Common myeloid progenitor, CD34-positive (primary cell): ENCODE measurements at regions of chr16 and their contacts with region 1.

Region 1: GRCh38 chr16:28317040-28317880 is 24.9 kb downstream of the SBK1 start:
- DNase-seq: peak; percentile 64 to 76 (median 75)
- H3K4me3 ChIP-seq: no peak overlapping the region
- H3K27ac ChIP-seq: no peak overlapping the region
- H3K4me1 ChIP-seq: peaks cover 0 to 2% (median 0%) of the 10 kb centered on the region in 4 experiments
- H3K27me3 ChIP-seq: no peaks in the 10 kb centered on the region

Region 2: GRCh38 chr16:28082624-28083023 is 234.6 kb before region 1 on chr16:
- CTCF ChIA-PET with region 1: no interaction called
- POLR2A ChIA-PET with region 1: no interaction called
- DNase-seq: no peak
- H3K4me3 ChIP-seq: no peak overlapping the region
- H3K27ac ChIP-seq: no peak overlapping the region
- H3K4me1 ChIP-seq: no peaks in the 10 kb centered on the region
- H3K27me3 ChIP-seq: no peaks in the 10 kb centered on the region

Region 3: GRCh38 chr16:28112883-28113282 is 204.4 kb before region 1 on chr16:
- CTCF ChIA-PET with region 1: no interaction called
- POLR2A ChIA-PET with region 1: no interaction called
- DNase-seq: no peak
- H3K4me3 ChIP-seq: no peak overlapping the region
- H3K27ac ChIP-seq: no peak overlapping the region
- H3K4me1 ChIP-seq: peaks cover 17 to 41% (median 34%) of the 10 kb centered on the region in 4 experiments
- H3K27me3 ChIP-seq: no peaks in the 10 kb centered on the region

Region 4: DNA sequence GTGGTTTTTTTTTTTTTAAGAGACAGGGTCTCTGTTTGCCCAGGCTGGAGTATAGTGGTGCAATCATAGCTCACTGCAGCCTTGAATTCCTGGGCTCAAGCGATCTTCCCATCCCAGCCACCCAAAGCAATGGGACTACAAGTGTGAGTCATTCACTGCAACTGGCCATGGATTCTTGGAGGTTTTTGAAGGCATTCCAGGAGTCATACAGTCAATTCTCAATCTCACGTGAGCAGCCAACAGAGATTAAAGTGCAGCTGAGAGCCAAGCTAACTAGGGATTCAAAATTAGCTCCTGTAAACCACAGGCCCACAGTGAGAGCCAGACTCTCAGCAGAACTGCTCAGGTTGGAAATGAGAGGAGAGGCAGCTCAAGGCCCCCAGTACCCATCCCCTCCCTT is 135.7 kb before region 1 on chr16:
- CTCF ChIA-PET with region 1: no interaction called
- POLR2A ChIA-PET with region 1: no interaction called
- DNase-seq: no peak
- H3K4me3 ChIP-seq: peak overlapping the region in 1 of 7 experiments; percentile 46
- H3K27ac ChIP-seq: peak overlapping the region in 1 of 2 experiments; percentile 77
- H3K4me1 ChIP-seq: peaks cover 11 to 29% (median 22%) of the 10 kb centered on the region in 4 experiments
- H3K27me3 ChIP-seq: no peaks in the 10 kb centered on the region

Region 5: DNA sequence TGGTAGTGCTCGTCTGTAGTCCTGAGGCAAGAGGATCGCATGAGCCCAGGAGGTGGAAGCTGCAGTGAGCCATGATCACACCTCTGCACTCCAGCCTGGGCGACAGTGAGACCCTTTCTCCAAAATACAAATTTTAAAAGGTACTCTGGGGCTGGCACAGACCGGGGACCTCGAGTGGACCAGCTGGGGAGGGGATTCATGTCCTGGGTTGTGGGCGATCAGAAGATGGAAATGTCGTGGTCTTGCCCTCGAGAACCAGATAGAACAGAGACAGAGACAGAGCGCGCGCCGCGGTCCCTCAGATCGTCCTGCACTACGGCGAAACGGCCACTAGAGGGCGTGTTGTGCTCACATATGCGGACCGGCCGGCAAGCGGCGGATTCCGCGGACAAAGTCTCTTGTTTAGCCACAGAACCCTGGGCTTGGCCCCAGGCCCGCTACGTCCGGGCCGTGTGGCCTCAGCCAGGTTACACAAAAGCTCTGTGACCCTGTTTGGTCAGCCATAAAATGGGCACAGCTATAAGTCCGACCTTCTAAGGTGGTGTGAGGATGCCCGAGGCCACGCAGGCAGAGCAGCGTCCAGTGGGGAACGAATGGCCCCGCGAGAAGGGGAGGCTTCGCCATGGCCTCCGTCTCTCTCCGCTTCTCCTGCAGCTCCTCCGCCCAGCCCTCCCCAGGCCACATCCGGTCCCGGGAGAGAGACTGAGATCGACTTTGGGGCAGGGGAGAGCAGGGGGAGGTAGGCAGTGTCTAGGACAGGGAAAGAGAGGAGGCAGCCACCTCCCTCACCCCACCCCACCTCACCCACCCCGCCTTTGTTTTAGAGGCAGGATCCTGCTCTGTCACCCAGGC is 39.5 kb before region 1 on chr16:
- CTCF ChIA-PET with region 1: interaction called, 104 read pairs
- POLR2A ChIA-PET with region 1: no interaction called
- DNase-seq: peak; percentile 69 to 83 (median 80)
- H3K4me3 ChIP-seq: peak overlapping the region in 6 of 7 experiments; percentile 15 to 81 (median 62)
- H3K27ac ChIP-seq: no peak overlapping the region
- H3K4me1 ChIP-seq: peaks cover 0 to 10% (median 6%) of the 10 kb centered on the region in 4 experiments
- H3K27me3 ChIP-seq: peaks cover 0 to 10% (median 4%) of the 10 kb centered on the region in 5 experiments

Region 6: GRCh38 chr16:28292731-28293600 is 24.3 kb before region 1 on chr16:
- CTCF ChIA-PET with region 1: interaction called, 12 read pairs
- POLR2A ChIA-PET with region 1: no interaction called
- DNase-seq: peak in 2 of 3 donors; percentile 33 to 34
- H3K4me3 ChIP-seq: peak overlapping the region; percentile 35 to 89 (median 72)
- H3K27ac ChIP-seq: no peak overlapping the region
- H3K4me1 ChIP-seq: peaks cover 0 to 37% (median 25%) of the 10 kb centered on the region in 4 experiments
- H3K27me3 ChIP-seq: peaks cover 0 to 17% (median 6%) of the 10 kb centered on the region in 5 experiments

Region 7: GRCh38 chr16:28835867-28836744 is 518.8 kb after region 1 on chr16:
- CTCF ChIA-PET with region 1: no interaction called
- POLR2A ChIA-PET with region 1: no interaction called
- DNase-seq: no peak
- H3K4me3 ChIP-seq: no peak overlapping the region
- H3K27ac ChIP-seq: no peak overlapping the region
- H3K4me1 ChIP-seq: peaks cover 0 to 5% (median 1%) of the 10 kb centered on the region in 4 experiments
- H3K27me3 ChIP-seq: no peaks in the 10 kb centered on the region